CD4-positive, alpha-beta T cell (primary cell): ENCODE measurements at regions of chr18 and their contacts with region 1.

Region 1: GRCh38 chr18:76875390-76876325 is 53.3 kb downstream of the ZNF236 start:
- DNase-seq: peak in 7 of 14 experiments; percentile 14 to 67 (median 51)
- ATAC-seq: peak; percentile 51
- H3K4me3 ChIP-seq: no peak overlapping the region
- H3K4me3 Mint-ChIP-seq: no peak overlapping the region
- H3K27ac ChIP-seq: no peak overlapping the region
- H3K27ac Mint-ChIP-seq: peak overlapping the region; percentile 60
- H3K4me1 ChIP-seq: peaks cover 4% of the 10 kb centered on the region
- H3K4me1 Mint-ChIP-seq: peaks cover 13% of the 10 kb centered on the region
- H3K27me3 ChIP-seq: no peaks in the 10 kb centered on the region
- H3K27me3 Mint-ChIP-seq: no peaks in the 10 kb centered on the region
- CTCF ChIP-seq: peak; percentile 55

Region 2: GRCh38 chr18:76195601-76196000 is 680.1 kb before region 1 on chr18:
- CTCF ChIA-PET with region 1: no interaction called
- POLR2A ChIA-PET with region 1: no interaction called
- intact Hi-C with region 1: no loop called
- DNase-seq: no peak
- ATAC-seq: no peak
- H3K4me3 ChIP-seq: no peak overlapping the region
- H3K4me3 Mint-ChIP-seq: no peak overlapping the region
- H3K27ac ChIP-seq: no peak overlapping the region
- H3K27ac Mint-ChIP-seq: no peak overlapping the region
- H3K4me1 ChIP-seq: no peaks in the 10 kb centered on the region
- H3K4me1 Mint-ChIP-seq: no peaks in the 10 kb centered on the region
- H3K27me3 ChIP-seq: no peaks in the 10 kb centered on the region
- H3K27me3 Mint-ChIP-seq: peaks cover 15% of the 10 kb centered on the region
- CTCF ChIP-seq: no peak

Region 3: GRCh38 chr18:76847916-76848315 is 27.7 kb before region 1 on chr18:
- CTCF ChIA-PET with region 1: no interaction called
- POLR2A ChIA-PET with region 1: no interaction called
- intact Hi-C with region 1: no loop called
- DNase-seq: no peak
- ATAC-seq: no peak
- H3K4me3 ChIP-seq: no peak overlapping the region
- H3K4me3 Mint-ChIP-seq: no peak overlapping the region
- H3K27ac ChIP-seq: no peak overlapping the region
- H3K27ac Mint-ChIP-seq: no peak overlapping the region
- H3K4me1 ChIP-seq: peaks cover 2% of the 10 kb centered on the region
- H3K4me1 Mint-ChIP-seq: peaks cover 38% of the 10 kb centered on the region
- H3K27me3 ChIP-seq: no peaks in the 10 kb centered on the region
- H3K27me3 Mint-ChIP-seq: no peaks in the 10 kb centered on the region
- CTCF ChIP-seq: no peak

Region 4: GRCh38 chr18:77177009-77177408 is 301.4 kb after region 1 on chr18:
- CTCF ChIA-PET with region 1: no interaction called
- POLR2A ChIA-PET with region 1: no interaction called
- intact Hi-C with region 1: no loop called
- DNase-seq: no peak
- ATAC-seq: no peak
- H3K4me3 ChIP-seq: no peak overlapping the region
- H3K4me3 Mint-ChIP-seq: no peak overlapping the region
- H3K27ac ChIP-seq: no peak overlapping the region
- H3K27ac Mint-ChIP-seq: no peak overlapping the region
- H3K4me1 ChIP-seq: no peaks in the 10 kb centered on the region
- H3K4me1 Mint-ChIP-seq: no peaks in the 10 kb centered on the region
- H3K27me3 ChIP-seq: no peaks in the 10 kb centered on the region
- H3K27me3 Mint-ChIP-seq: no peaks in the 10 kb centered on the region
- CTCF ChIP-seq: no peak

Region 5: DNA sequence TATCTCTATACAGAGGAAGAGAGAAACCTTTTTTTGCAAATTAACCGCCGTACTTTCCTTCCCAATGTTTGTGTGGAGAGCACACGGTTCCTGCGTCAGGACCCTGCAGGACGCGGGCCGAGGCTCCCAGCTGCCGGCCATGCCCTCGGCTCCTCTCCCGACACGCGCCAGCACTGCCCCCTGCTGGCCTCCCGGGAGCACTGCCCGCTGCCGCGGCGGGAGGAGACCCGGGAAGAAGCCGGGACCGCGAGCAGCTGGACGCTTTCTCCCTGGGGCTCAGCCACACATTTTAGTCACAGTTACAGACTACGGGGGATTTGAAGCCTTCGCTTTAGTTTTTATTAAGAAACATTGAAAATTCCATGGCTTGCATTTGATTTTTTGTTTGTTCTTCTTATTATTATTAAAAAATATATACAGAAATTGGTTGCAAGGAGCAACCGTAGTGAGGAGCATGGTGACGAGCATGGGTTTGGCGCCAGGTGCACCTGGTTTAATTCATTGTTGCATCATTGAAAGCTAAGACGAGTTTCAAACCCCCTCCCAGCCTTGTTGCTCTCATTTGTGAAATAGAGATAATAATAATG is 775.2 kb after region 1 on chr18:
- CTCF ChIA-PET with region 1: no interaction called
- POLR2A ChIA-PET with region 1: no interaction called
- intact Hi-C with region 1: loop called in 1 of 2 experiments (anchors 5 kb)
- DNase-seq: peak in 13 of 14 experiments; percentile 15 to 66 (median 36)
- ATAC-seq: peak; percentile 44
- H3K4me3 ChIP-seq: no peak overlapping the region
- H3K4me3 Mint-ChIP-seq: no peak overlapping the region
- H3K27ac ChIP-seq: no peak overlapping the region
- H3K27ac Mint-ChIP-seq: no peak overlapping the region
- H3K4me1 ChIP-seq: peaks cover 5% of the 10 kb centered on the region
- H3K4me1 Mint-ChIP-seq: no peaks in the 10 kb centered on the region
- H3K27me3 ChIP-seq: peaks cover 6 to 14% of the 10 kb centered on the region in 2 experiments
- H3K27me3 Mint-ChIP-seq: peaks cover 24% of the 10 kb centered on the region
- CTCF ChIP-seq: peak; percentile 52